Activated CD4-positive, alpha-beta T cell treated with anti-CD3 and anti-CD28 coated beads, Interleukin-2, amount 10 ng/mL, durations not matched to agents 24 days and 14 days (primary cell): ENCODE measurements at regions of chr6 and their contacts with region 1.

Region 1: DNA sequence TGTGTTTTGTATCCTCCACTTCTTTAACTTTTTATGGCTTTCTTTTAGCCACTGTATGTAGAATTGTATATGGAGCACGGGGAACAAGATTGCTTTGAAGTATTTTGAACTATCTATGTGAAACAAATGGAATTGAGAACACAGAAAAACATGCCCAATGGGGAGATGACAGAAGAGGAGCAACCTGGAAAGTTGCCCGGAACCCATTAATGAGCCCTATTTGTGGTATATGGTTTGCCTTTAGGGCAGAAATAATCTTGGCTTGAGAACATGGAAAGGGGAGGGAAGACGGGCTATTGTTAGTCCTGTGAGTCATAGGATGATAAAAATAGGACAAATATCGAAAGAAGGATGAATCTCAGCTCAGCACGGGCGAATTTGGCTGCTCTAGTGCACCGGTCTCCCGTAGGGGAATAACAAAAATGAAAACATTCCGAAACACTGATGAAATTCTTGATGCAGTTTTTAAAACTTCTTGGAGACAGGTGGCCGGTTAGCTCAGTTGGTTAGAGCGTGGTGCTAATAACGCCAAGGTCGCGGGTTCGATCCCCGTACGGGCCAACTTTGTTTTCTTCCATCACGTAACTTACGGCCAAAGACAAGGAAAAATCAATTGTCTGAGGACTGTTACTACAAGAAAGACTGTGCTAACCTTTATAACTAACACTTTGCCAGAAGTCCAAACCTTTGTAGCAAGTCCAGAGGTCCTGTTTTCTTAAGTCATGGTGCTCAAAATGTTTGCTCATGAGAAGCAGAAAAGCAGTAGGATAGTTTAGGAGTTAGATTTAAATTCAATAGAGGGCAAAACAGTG is 15.7 kb downstream of the HMGN4 start:
- DNase-seq: peak; percentile 94
- H3K4me3 Mint-ChIP-seq: no peak overlapping the region
- H3K27ac Mint-ChIP-seq: no peak overlapping the region
- H3K4me1 Mint-ChIP-seq: peaks cover 22% of the 10 kb centered on the region
- H3K27me3 Mint-ChIP-seq: peaks cover 2% of the 10 kb centered on the region

Region 2: GRCh38 chr6:26045065-26045927 is 508.5 kb before region 1 on chr6:
- intact Hi-C with region 1: loop called (anchors 5 kb)
- DNase-seq: peak; percentile 96
- H3K4me3 Mint-ChIP-seq: peak overlapping the region; percentile 86
- H3K27ac Mint-ChIP-seq: peak overlapping the region; percentile 99
- H3K4me1 Mint-ChIP-seq: peaks cover 33% of the 10 kb centered on the region
- H3K27me3 Mint-ChIP-seq: no peaks in the 10 kb centered on the region

Region 3: GRCh38 chr6:26322645-26323482 is 231.0 kb before region 1 on chr6:
- intact Hi-C with region 1: loop called (anchors 1 kb)
- DNase-seq: peak; percentile 92
- H3K4me3 Mint-ChIP-seq: peak overlapping the region; percentile 89
- H3K27ac Mint-ChIP-seq: peak overlapping the region; percentile 93
- H3K4me1 Mint-ChIP-seq: peaks cover 37% of the 10 kb centered on the region
- H3K27me3 Mint-ChIP-seq: peaks cover 6% of the 10 kb centered on the region